T-cell (primary cell): ENCODE measurements at regions of chr9 and their contacts with region 1.

Region 1: GRCh38 chr9:126947529-126947928 is 32.9 kb downstream of the RALGPS1 start:
- DNase-seq: peak in 3 of 35 experiments; percentile 4 to 22 (median 6)
- ATAC-seq: peak in 1 of 4 experiments; percentile 36
- H3K4me3 ChIP-seq: no peak overlapping the region
- H3K4me3 Mint-ChIP-seq: no peak overlapping the region
- H3K27ac ChIP-seq: no peak overlapping the region
- H3K27ac Mint-ChIP-seq: no peak overlapping the region
- H3K4me1 ChIP-seq: no peaks in the 10 kb centered on the region
- H3K4me1 Mint-ChIP-seq: no peaks in the 10 kb centered on the region
- H3K27me3 ChIP-seq: peaks cover 0 to 8% of the 10 kb centered on the region in 2 experiments
- H3K27me3 Mint-ChIP-seq: peaks cover 2 to 14% of the 10 kb centered on the region in 2 donors

Region 2: GRCh38 chr9:126781186-126782052 is 166.1 kb before region 1 on chr9:
- CTCF ChIA-PET with region 1: no interaction called
- POLR2A ChIA-PET with region 1: no interaction called
- DNase-seq: peak; percentile 43 to 87 (median 76)
- ATAC-seq: peak; percentile 85 to 95 (median 88)
- H3K4me3 ChIP-seq: no peak overlapping the region
- H3K4me3 Mint-ChIP-seq: no peak overlapping the region
- H3K27ac ChIP-seq: no peak overlapping the region
- H3K27ac Mint-ChIP-seq: no peak overlapping the region
- H3K4me1 ChIP-seq: peaks cover 0 to 7% of the 10 kb centered on the region in 2 experiments
- H3K4me1 Mint-ChIP-seq: no peaks in the 10 kb centered on the region
- H3K27me3 ChIP-seq: peaks cover 0 to 46% of the 10 kb centered on the region in 2 experiments
- H3K27me3 Mint-ChIP-seq: peaks cover 22 to 38% of the 10 kb centered on the region in 2 donors

Region 3: GRCh38 chr9:127035951-127036350 is 88.4 kb after region 1 on chr9:
- CTCF ChIA-PET with region 1: no interaction called
- POLR2A ChIA-PET with region 1: no interaction called
- DNase-seq: no peak
- ATAC-seq: no peak
- H3K4me3 ChIP-seq: no peak overlapping the region
- H3K4me3 Mint-ChIP-seq: no peak overlapping the region
- H3K27ac ChIP-seq: no peak overlapping the region
- H3K27ac Mint-ChIP-seq: no peak overlapping the region
- H3K4me1 ChIP-seq: no peaks in the 10 kb centered on the region
- H3K4me1 Mint-ChIP-seq: no peaks in the 10 kb centered on the region
- H3K27me3 ChIP-seq: no peaks in the 10 kb centered on the region
- H3K27me3 Mint-ChIP-seq: peaks cover 0 to 6% of the 10 kb centered on the region in 2 donors

Region 4: DNA sequence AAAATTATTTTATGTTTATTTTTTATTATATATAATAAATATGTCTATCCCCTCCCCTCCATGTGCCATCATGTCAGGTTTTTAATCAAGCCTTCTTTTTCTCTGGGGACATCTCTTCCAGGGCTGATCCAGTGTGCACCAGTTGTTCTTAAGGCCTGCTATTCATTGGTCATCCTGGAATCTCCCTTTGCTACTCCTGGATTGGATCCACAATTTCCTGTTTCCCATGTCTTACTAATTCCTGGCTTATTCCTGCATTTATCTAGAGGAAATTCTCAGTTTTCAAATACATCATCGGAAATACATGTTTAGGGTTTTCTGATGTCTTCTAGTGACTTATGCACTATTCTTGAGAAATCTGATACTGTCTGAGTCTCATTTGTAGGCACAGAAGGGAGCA is 118.1 kb after region 1 on chr9:
- CTCF ChIA-PET with region 1: no interaction called
- POLR2A ChIA-PET with region 1: interaction called in 1 of 2 experiments, 13 read pairs
- DNase-seq: no peak
- ATAC-seq: no peak
- H3K4me3 ChIP-seq: no peak overlapping the region
- H3K4me3 Mint-ChIP-seq: no peak overlapping the region
- H3K27ac ChIP-seq: no peak overlapping the region
- H3K27ac Mint-ChIP-seq: no peak overlapping the region
- H3K4me1 ChIP-seq: no peaks in the 10 kb centered on the region
- H3K4me1 Mint-ChIP-seq: no peaks in the 10 kb centered on the region
- H3K27me3 ChIP-seq: no peaks in the 10 kb centered on the region
- H3K27me3 Mint-ChIP-seq: no peaks in the 10 kb centered on the region

Region 5: DNA sequence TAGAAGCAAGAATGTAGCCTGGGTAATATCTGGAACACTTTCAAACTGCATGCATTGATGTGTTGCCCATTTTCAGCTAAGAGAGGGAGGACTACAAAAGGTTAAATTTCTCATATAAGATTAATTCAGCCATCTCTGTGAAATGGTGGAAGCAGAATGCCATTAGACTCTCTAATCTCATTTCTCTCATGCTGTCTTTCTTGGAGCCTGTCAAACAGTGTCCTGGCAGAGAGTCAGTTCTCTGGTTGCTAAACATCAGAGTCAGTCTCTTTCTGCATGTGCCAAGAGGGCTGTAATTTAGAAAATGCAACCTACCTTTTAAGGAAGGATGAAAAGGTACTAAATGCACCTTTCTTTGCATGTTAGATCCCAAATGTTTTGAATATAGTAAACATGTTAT is 316.1 kb after region 1 on chr9:
- CTCF ChIA-PET with region 1: no interaction called
- POLR2A ChIA-PET with region 1: no interaction called
- DNase-seq: no peak
- ATAC-seq: no peak
- H3K4me3 ChIP-seq: no peak overlapping the region
- H3K4me3 Mint-ChIP-seq: no peak overlapping the region
- H3K27ac ChIP-seq: no peak overlapping the region
- H3K27ac Mint-ChIP-seq: no peak overlapping the region
- H3K4me1 ChIP-seq: no peaks in the 10 kb centered on the region
- H3K4me1 Mint-ChIP-seq: no peaks in the 10 kb centered on the region
- H3K27me3 ChIP-seq: no peaks in the 10 kb centered on the region
- H3K27me3 Mint-ChIP-seq: peaks cover 1 to 12% of the 10 kb centered on the region in 2 donors

Region 6: DNA sequence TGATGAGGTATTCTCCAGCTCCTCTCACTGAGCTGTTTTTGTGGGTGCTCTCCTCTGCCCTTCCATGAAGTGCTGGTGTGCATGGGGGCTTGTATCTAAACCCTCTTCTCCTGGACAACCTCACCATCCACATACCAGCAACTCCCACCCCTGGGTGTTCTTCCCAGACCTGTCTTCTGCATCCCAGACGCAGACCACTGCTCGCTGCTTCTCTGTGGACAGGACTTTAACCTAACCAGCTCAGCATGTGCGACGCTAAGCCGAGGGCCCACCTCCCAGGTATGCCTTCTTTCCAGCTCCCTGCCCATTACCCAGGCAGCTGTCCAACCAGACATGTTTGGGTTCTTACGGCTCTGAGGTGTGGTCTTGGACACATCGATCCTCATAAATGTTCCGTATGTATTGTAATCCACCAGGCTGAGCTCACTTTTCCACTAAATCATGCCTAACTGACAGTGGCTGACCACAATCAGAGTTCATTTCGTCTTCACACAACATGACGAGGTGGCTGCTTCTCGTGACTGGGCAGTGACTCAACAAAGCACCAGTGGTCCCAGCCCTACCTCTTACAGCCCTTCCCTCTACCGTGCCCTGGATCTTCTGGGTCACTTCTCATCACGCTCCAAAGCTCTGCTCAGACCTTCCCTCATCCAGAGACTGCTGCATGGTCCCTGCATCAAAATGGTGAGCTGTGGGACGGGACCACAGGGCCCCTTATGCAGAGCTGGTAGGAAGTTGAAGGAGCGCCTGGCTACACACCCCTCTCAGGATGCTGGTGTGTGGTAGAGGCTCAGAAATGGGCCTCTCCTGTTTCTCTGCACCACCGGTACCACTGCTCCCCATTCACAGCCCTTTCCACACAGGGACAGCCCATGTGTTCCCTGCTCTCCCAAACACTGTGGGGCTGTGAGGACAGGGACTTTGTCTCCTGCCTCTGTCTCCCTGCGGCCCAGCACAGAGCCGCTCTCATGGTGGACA is 1189.6 kb after region 1 on chr9:
- CTCF ChIA-PET with region 1: no interaction called
- POLR2A ChIA-PET with region 1: no interaction called
- DNase-seq: no peak
- ATAC-seq: no peak
- H3K4me3 ChIP-seq: no peak overlapping the region
- H3K4me3 Mint-ChIP-seq: no peak overlapping the region
- H3K27ac ChIP-seq: no peak overlapping the region
- H3K27ac Mint-ChIP-seq: no peak overlapping the region
- H3K4me1 ChIP-seq: peaks cover 3 to 10% of the 10 kb centered on the region in 2 experiments
- H3K4me1 Mint-ChIP-seq: peaks cover 12 to 16% (median 13%) of the 10 kb centered on the region in 3 donors
- H3K27me3 ChIP-seq: peaks cover 0 to 5% of the 10 kb centered on the region in 2 experiments
- H3K27me3 Mint-ChIP-seq: peaks cover 0 to 10% of the 10 kb centered on the region in 2 donors